ENCODE measurements at regions of chr10 and their contacts with region 1.

Region 1: GRCh38 chr10:6050801-6051445 is 11.2 kb downstream of the IL2RA start:
- DNase-seq: peak; percentile 72 to 95 (median 90)
- ATAC-seq: peak; percentile 81 to 94
- H3K4me3 Mint-ChIP-seq: peak overlapping the region; percentile 84 to 98 (median 94)
- H3K27ac Mint-ChIP-seq: peak overlapping the region; percentile 94 to 98 (median 96)
- H3K4me1 Mint-ChIP-seq: peaks cover 42 to 81% (median 68%) of the 10 kb centered on the region in 4 donors
- H3K27me3 Mint-ChIP-seq: peaks cover 0 to 2% (median 0%) of the 10 kb centered on the region in 5 donors

Region 2: DNA sequence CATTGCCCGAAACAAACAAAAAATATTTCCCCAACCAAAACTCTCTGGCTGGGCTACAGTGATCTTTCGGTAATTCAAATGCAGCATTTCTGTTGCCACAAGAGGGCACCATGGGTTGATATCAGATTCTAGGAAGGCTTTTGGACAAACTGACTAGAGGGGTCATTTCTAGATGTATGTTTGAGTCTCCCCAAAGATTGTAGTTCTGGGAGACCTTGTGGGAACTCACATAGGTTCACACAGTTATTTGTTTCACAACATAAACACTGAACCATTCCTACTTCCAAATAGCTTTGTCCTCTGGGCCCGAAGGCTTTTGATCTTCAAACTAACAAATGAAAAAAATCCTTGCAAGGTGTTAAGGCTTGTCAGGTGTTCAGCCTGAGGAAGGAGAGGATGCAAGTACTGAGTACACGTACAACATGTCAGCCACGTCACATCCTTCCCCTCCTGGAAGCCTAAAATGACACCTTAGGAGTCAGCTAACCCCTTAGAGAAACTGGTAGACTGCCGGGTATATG is 36.6 kb before region 1 on chr10:
- POLR2A ChIA-PET with region 1: interaction called, 23 read pairs
- DNase-seq: peak; percentile 23 to 81 (median 70)
- ATAC-seq: peak; percentile 98 to 100
- H3K4me3 Mint-ChIP-seq: peak overlapping the region in 5 of 10 donors; percentile 2 to 51 (median 28)
- H3K27ac Mint-ChIP-seq: peak overlapping the region; percentile 50 to 96 (median 93)
- H3K4me1 Mint-ChIP-seq: peaks cover 7 to 13% (median 12%) of the 10 kb centered on the region in 4 donors
- H3K27me3 Mint-ChIP-seq: no peaks in the 10 kb centered on the region

Region 3: DNA sequence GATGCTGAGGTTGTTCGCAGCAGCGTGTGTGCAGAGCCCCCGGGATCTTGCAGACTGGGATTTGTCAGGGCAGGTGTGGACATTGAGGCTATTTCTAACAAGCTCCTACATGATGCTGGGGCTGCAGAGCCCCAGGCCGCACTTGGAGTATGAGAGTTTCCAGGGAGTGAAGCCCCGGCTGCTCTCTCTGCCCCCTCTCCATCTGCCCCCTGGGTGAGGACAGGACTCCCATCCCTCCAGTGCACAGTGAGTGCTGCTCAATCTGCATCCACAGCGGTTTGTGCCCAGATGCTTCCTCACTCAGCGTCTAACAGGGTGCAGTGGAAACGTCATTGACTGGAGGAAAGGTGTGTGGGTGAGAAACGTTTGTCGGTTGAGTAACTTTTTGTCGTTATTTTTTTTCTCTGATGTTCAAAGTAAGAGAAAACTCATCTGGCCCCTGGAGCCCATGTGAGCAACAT is 14.0 kb before region 1 on chr10:
- POLR2A ChIA-PET with region 1: interaction called, 12 read pairs
- DNase-seq: no peak
- ATAC-seq: peak; percentile 50 to 67
- H3K4me3 Mint-ChIP-seq: peak overlapping the region in 4 of 10 donors; percentile 28 to 50 (median 36)
- H3K27ac Mint-ChIP-seq: peak overlapping the region in 8 of 10 donors; percentile 37 to 92 (median 80)
- H3K4me1 Mint-ChIP-seq: peaks cover 17 to 37% (median 35%) of the 10 kb centered on the region in 4 donors
- H3K27me3 Mint-ChIP-seq: no peaks in the 10 kb centered on the region

Region 4: GRCh38 chr10:6062101-6062771 is 11.3 kb after region 1 on chr10 and contains the start of gene IL2RA:
- POLR2A ChIA-PET with region 1: interaction called, 77 read pairs
- DNase-seq: peak in 8 of 10 donors; percentile 45 to 77 (median 58)
- ATAC-seq: peak; percentile 95
- H3K4me3 Mint-ChIP-seq: peak within 1 kb of the TSS; percentile 60 to 86 (median 80)
- H3K27ac Mint-ChIP-seq: peak within 1 kb of the TSS; percentile 17 to 88 (median 67)
- H3K4me1 Mint-ChIP-seq: peaks cover 18 to 70% (median 39%) of the 10 kb centered on the region in 4 donors
- H3K27me3 Mint-ChIP-seq: no peaks in the 10 kb centered on the region
- polyA plus RNA-seq, gene IL2RA: 0.07 to 0.25 (median 0.16) TPM

Region 5: GRCh38 chr10:6068422-6068821 is 17.5 kb after region 1 on chr10:
- POLR2A ChIA-PET with region 1: interaction called, 77 read pairs
- DNase-seq: peak in 8 of 10 donors; percentile 38 to 77 (median 66)
- ATAC-seq: peak; percentile 95 to 96
- H3K4me3 Mint-ChIP-seq: peak overlapping the region; percentile 69 to 89 (median 82)
- H3K27ac Mint-ChIP-seq: peak overlapping the region in 9 of 10 donors; percentile 65 to 91 (median 81)
- H3K4me1 Mint-ChIP-seq: peaks cover 33 to 85% (median 72%) of the 10 kb centered on the region in 4 donors
- H3K27me3 Mint-ChIP-seq: no peaks in the 10 kb centered on the region

Region 6: GRCh38 chr10:6088721-6089390 is 37.9 kb after region 1 on chr10 and contains the start of gene RBM17:
- POLR2A ChIA-PET with region 1: interaction called, 32 read pairs
- DNase-seq: peak; percentile 93 to 100 (median 98)
- ATAC-seq: peak; percentile 79 to 86
- H3K4me3 Mint-ChIP-seq: peak within 1 kb of the TSS; percentile 82 to 97 (median 92)
- H3K27ac Mint-ChIP-seq: peak within 1 kb of the TSS; percentile 75 to 95 (median 85)
- H3K4me1 Mint-ChIP-seq: peaks cover 36 to 67% (median 58%) of the 10 kb centered on the region in 4 donors
- H3K27me3 Mint-ChIP-seq: peaks cover 0 to 1% (median 0%) of the 10 kb centered on the region in 5 donors
- polyA plus RNA-seq, gene RBM17: 57.4 to 84.9 (median 61.3) TPM

Measured in naive thymus-derived CD8-positive, alpha-beta T cell (primary cell).